Heart right ventricle (tissue), 16 donors: ENCODE measurements at regions of chr22 and their contacts with region 1.

Region 1: DNA sequence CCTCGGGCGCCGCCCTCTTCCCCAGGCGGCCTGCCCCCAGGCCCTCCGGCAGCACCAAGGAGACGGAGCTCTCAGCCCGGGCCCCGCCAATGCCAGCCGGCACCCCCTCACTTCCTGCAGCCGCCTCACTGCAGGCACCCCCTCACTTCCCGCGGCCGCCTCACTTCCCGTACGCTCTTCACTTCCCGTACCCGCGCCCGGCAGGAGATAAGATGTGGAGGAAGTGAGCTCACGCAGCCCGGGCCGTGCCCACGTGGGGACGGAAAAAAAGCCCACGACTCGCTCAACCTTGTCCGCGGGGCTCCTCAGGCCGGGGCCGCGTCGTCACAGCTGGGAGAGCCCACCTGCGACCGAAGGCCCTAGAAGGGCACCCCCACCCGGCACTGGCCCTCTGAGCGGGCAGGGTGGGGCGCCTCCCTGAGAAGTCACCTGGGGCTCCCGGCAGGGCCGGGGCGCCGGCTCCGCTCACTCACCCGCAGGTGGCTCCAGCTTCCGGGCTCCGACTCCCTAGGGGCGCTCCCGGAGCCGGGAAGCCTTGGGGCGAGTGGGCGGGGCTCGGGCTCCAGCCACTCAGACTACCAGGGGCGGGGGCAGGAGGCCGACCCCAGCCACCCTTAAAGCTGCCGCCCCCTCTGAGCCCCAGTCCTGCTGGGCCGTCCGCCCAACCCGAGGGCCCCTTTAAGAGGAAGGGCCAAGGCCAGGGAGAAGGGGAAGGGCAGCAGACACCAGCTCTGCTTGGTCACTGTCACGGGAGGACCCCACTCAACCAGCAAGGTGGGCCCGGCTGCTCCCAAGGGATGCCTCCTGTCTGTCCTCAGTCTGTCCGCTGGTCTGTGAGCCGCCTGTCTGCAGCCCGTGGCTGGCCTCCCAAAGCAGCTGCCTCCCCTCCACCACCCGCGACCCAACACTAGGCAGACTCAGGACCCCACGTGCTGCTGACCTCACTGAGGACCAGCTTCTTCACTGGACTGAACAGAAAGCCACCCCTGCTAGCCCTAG is 31.4 kb downstream of the PISD start:
- DNase-seq: peak; percentile 82 to 83
- ATAC-seq: peak; percentile 79 to 91 (median 84)
- H3K4me3 ChIP-seq: peak overlapping the region; percentile 53 to 93 (median 80)
- H3K27ac ChIP-seq: peak overlapping the region; percentile 60 to 97 (median 92)
- H3K4me1 ChIP-seq: peaks cover 22 to 71% (median 47%) of the 10 kb centered on the region in 9 donors
- H3K27me3 ChIP-seq: no peaks in the 10 kb centered on the region
- CTCF ChIP-seq: no peak

Region 2: GRCh38 chr22:31489604-31490495 is 140.8 kb before region 1 on chr22 and contains the start of gene EIF4ENIF1:
- intact Hi-C with region 1: loop called in 1 of 10 experiments (anchors 5 kb)
- DNase-seq: peak; percentile 90 to 93
- ATAC-seq: peak; percentile 92 to 97 (median 96)
- H3K4me3 ChIP-seq: peak within 1 kb of the TSS; percentile 69 to 94 (median 80)
- H3K27ac ChIP-seq: peak within 1 kb of the TSS; percentile 89 to 100 (median 99)
- H3K4me1 ChIP-seq: peaks cover 2 to 36% (median 32%) of the 10 kb centered on the region in 9 donors
- H3K27me3 ChIP-seq: no peaks in the 10 kb centered on the region
- CTCF ChIP-seq: no peak
- total RNA-seq, gene EIF4ENIF1: 20.3 to 31.9 (median 22.7) TPM

Region 3: DNA sequence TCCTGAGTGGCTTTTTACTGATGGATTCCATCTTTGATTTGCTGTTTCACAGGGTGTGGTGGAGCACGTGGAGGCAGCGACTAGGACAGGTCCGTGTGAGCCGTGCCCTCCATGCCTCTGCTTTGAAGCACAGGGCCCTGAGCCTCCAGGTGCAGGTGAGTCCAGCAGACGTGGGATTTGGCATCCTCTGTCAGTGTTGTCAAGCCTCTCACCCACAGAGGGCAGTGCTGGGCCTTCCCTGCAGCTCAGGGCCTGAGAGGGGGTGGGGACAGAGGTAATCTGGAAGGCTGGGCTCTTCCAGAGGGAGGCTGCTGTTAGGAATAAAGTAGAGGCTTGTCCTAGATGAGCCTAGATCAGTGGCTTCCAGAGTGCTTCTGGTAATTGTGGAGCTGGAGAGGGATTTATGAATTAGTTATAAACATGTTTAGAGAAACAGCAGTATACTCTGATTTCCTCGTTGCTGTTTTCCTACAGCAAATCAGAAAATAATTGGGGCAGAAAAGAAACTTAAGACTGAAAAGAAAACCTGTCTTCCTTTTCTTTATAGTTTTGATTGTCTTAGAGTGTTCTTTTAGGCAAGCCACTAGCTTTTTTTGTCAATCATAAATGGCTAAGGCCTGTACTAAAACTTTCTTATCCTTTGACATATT is 69.3 kb before region 1 on chr22:
- intact Hi-C with region 1: loop called (anchors 1 to 5 kb)
- DNase-seq: peak; percentile 62 to 74
- ATAC-seq: peak; percentile 79 to 96 (median 90)
- H3K4me3 ChIP-seq: no peak overlapping the region
- H3K27ac ChIP-seq: no peak overlapping the region
- H3K4me1 ChIP-seq: peaks cover 0 to 6% (median 0%) of the 10 kb centered on the region in 9 donors
- H3K27me3 ChIP-seq: no peaks in the 10 kb centered on the region
- CTCF ChIP-seq: peak; percentile 46 to 81 (median 73)

Region 4: GRCh38 chr22:31595271-31595670 is 35.4 kb before region 1 on chr22:
- intact Hi-C with region 1: no loop called
- DNase-seq: no peak
- ATAC-seq: no peak
- H3K4me3 ChIP-seq: no peak overlapping the region
- H3K27ac ChIP-seq: no peak overlapping the region
- H3K4me1 ChIP-seq: no peaks in the 10 kb centered on the region
- H3K27me3 ChIP-seq: no peaks in the 10 kb centered on the region
- CTCF ChIP-seq: no peak